ENCODE measurements at regions of chr14 and their contacts with region 1.

Region 1: GRCh38 chr14:105107781-105108515 is 42.7 kb upstream of the GPR132 start:
- DNase-seq: no peak
- H3K4me3 ChIP-seq: no peak overlapping the region
- H3K27ac ChIP-seq: no peak overlapping the region
- H3K27me3 ChIP-seq: peaks cover 23% of the 10 kb centered on the region
- CTCF ChIP-seq: no peak

Region 2: GRCh38 chr14:104723648-104724406 is 384.1 kb before region 1 on chr14 and contains the start of gene ADSS1:
- CTCF ChIA-PET with region 1: no interaction called
- POLR2A ChIA-PET with region 1: no interaction called
- DNase-seq: no peak
- H3K4me3 ChIP-seq: peak within 1 kb of the TSS; percentile 58
- H3K27ac ChIP-seq: no peak within 1 kb of the TSS
- H3K27me3 ChIP-seq: peaks cover 6% of the 10 kb centered on the region
- CTCF ChIP-seq: peak; percentile 74
- polyA plus RNA-seq, gene ADSS1: 2.8 and 4.2 TPM in 2 replicates

Region 3: DNA sequence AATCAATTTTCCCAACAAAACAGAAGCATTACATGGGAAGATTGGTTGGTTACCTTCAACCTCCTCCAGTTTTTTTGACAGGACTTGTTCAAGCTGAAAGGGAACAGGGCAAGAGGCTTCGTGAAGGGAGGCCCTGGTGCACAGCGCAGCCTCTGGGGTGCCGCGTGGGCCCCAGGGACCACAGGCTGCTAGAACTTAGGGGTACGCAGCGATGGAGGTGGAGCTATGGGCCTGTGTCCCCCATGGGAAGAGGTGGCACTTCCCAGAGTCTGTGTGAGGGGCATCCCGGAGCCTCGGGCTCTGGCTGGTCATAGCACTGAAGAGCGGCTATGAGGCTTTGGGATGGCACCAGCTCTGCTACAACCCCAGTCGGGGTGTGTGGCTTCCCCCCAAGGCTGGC is 118.2 kb after region 1 on chr14:
- CTCF ChIA-PET with region 1: no interaction called
- POLR2A ChIA-PET with region 1: interaction called, 10 read pairs
- DNase-seq: no peak
- H3K4me3 ChIP-seq: no peak overlapping the region
- H3K27ac ChIP-seq: no peak overlapping the region
- H3K27me3 ChIP-seq: no peaks in the 10 kb centered on the region
- CTCF ChIP-seq: no peak